ENCODE measurements at regions of chrX and their contacts with region 1.

Region 1: GRCh38 chrX:119468930-119469635 is 839 bp downstream of the SLC25A5 start:
- DNase-seq: peak; percentile 63 to 86 (median 78)
- H3K4me3 ChIP-seq: peak overlapping the region; percentile 41 to 88 (median 72)
- H3K27ac ChIP-seq: peak overlapping the region; percentile 32 to 96 (median 88)
- H3K27me3 ChIP-seq: peaks cover 0 to 14% (median 0%) of the 10 kb centered on the region in 45 donors
- CTCF ChIP-seq: peak in 55 of 56 donors; percentile 41 to 81 (median 70)

Region 2: GRCh38 chrX:119235872-119236622 is 233.0 kb before region 1 on chrX and contains the start of gene PGRMC1:
- intact Hi-C with region 1: loop called in 1 of 2 experiments (anchors 5 kb)
- DNase-seq: peak; percentile 60 to 88 (median 78)
- H3K4me3 ChIP-seq: peak within 1 kb of the TSS; percentile 26 to 83 (median 71)
- H3K27ac ChIP-seq: peak within 1 kb of the TSS in 58 of 59 donors; percentile 22 to 91 (median 81)
- H3K27me3 ChIP-seq: peaks cover 0 to 55% (median 7%) of the 10 kb centered on the region in 45 donors
- CTCF ChIP-seq: peak in 1 of 56 donors; percentile 9
- total RNA-seq, gene PGRMC1: 40.9 to 169 (median 110) TPM

Region 3: DNA sequence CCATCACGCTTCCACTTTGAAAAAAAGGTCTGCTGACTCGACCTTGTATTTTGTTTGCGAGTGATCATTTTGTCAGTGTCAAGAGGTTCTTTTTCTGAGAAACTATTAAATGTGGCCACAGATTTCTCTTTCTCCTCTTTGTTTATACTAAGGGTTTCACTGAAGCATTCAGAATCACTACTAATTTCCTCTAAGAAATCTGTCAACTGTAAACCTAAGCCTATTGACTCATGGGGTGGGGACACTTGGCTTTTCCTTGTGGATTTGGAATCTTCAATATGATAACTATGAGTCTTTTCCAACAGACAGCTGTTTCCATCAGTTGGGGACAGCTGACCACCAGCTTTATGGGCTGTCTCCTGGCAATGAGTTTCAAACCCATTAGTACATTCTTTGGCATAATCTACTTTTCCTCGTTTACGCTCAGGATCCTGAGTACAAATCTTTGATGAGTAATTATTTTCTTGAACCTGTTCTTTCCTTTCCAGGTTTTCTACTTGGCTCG is 219.2 kb before region 1 on chrX:
- intact Hi-C with region 1: no loop called
- DNase-seq: no peak
- H3K4me3 ChIP-seq: no peak overlapping the region
- H3K27ac ChIP-seq: no peak overlapping the region
- H3K27me3 ChIP-seq: peaks cover 0 to 62% (median 8%) of the 10 kb centered on the region in 45 donors
- CTCF ChIP-seq: no peak

Region 4: GRCh38 chrX:119427024-119427794 is 41.9 kb before region 1 on chrX:
- intact Hi-C with region 1: loop called in 1 of 2 experiments (anchors 5 kb)
- DNase-seq: peak in 4 of 10 donors; percentile 34 to 45 (median 40)
- H3K4me3 ChIP-seq: no peak overlapping the region
- H3K27ac ChIP-seq: peak overlapping the region in 22 of 59 donors; percentile 0 to 64 (median 30)
- H3K27me3 ChIP-seq: peaks cover 0 to 31% (median 2%) of the 10 kb centered on the region in 45 donors
- CTCF ChIP-seq: no peak

Region 5: DNA sequence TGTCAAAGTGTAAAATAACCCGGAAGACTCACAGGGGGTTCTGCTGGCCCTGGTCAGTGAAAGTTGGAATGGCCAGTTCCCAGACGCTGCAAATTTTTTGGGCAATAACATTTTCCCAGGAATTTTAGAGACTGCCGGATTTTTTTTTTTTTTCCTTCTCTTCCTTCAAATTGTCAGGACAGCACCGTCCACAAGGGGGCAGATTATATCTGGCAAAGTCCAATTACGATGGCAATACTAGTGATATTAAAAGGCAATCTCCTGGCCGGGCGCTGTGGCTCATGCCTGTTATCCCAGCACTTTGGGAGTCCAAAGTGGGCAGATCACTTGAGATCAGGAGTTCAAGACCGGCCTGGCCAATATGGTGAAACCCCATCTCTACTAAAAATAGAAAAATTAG is 19.7 kb after region 1 on chrX:
- intact Hi-C with region 1: loop called in 1 of 2 experiments (anchors 2 kb)
- DNase-seq: peak in 4 of 10 donors; percentile 24 to 62 (median 48)
- H3K4me3 ChIP-seq: no peak overlapping the region
- H3K27ac ChIP-seq: no peak overlapping the region
- H3K27me3 ChIP-seq: peaks cover 0 to 42% (median 0%) of the 10 kb centered on the region in 45 donors
- CTCF ChIP-seq: peak; percentile 38 to 72 (median 60)

Region 6: GRCh38 chrX:119636419-119636818 is 167.3 kb after region 1 on chrX:
- intact Hi-C with region 1: no loop called
- DNase-seq: no peak
- H3K4me3 ChIP-seq: no peak overlapping the region
- H3K27ac ChIP-seq: no peak overlapping the region
- H3K27me3 ChIP-seq: peaks cover 0 to 48% (median 5%) of the 10 kb centered on the region in 45 donors
- CTCF ChIP-seq: no peak